ENCODE measurements at regions of chr15 and their contacts with region 1.

Region 1: GRCh38 chr15:55526559-55527036 is 18.6 kb upstream of the DNAAF4 start:
- DNase-seq: peak in 1 of 2 experiments; percentile 54
- H3K4me3 ChIP-seq: no peak overlapping the region
- H3K27ac ChIP-seq: no peak overlapping the region
- H3K4me1 ChIP-seq: no peaks in the 10 kb centered on the region
- H3K27me3 ChIP-seq: peaks cover 0 to 9% (median 7%) of the 10 kb centered on the region in 4 experiments; a peak in 4 of 7 replicates
- CTCF ChIP-seq: peak; percentile 52 to 88 (median 67)
- EP300 ChIP-seq: no peak
- POLR2A ChIP-seq: no peak
- RAD21 ChIP-seq: peak; percentile 54 to 67; a peak in 3 of 4 replicates

Region 2: DNA sequence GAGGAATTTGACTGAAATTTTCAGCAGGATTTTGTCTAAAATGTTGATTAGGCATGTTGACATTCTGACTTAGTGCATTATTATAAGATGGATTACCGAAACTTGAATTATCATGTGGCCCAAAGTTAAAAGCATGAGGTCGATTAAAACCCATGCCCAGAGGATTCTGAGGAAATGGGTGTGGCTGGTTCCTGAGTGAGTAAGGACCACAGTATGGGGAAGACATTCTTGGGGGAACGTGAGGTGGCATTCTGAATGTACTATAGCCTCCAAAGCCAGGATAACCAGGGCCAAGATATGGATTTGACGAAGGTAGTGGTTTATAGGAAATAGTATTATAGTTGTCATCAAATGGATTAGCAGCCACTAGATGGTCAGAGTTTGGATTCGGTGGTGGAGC is 20.1 kb after region 1 on chr15:
- CTCF ChIA-PET with region 1: interaction called, 11 read pairs
- POLR2A ChIA-PET with region 1: no interaction called
- DNase-seq: no peak
- H3K4me3 ChIP-seq: no peak overlapping the region
- H3K27ac ChIP-seq: no peak overlapping the region
- H3K4me1 ChIP-seq: no peaks in the 10 kb centered on the region
- H3K27me3 ChIP-seq: no peaks in the 10 kb centered on the region
- CTCF ChIP-seq: no peak
- EP300 ChIP-seq: no peak
- POLR2A ChIP-seq: no peak
- RAD21 ChIP-seq: no peak

Region 3: DNA sequence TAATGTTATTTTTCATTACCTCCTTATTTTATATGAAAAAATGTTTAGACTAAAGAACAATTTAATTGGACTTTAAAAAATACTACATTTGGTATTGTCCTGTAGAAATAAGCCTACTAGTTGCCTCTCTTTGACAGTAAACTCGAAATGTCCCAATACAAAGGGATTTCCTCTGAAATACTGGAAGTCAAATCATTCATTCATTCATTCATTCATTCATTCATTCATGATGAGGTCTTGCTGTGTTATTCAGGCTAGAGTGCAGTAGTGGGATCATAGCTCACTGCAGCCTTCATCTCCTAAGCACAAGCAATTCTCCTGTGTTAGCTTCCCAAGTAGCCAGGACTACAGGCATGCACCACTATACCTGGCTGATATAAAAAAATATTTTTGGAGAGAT is 112.2 kb after region 1 on chr15:
- CTCF ChIA-PET with region 1: interaction called, 40 read pairs
- POLR2A ChIA-PET with region 1: no interaction called
- DNase-seq: no peak
- H3K4me3 ChIP-seq: no peak overlapping the region
- H3K27ac ChIP-seq: no peak overlapping the region
- H3K4me1 ChIP-seq: no peaks in the 10 kb centered on the region
- H3K27me3 ChIP-seq: no peaks in the 10 kb centered on the region
- CTCF ChIP-seq: no peak
- EP300 ChIP-seq: no peak
- POLR2A ChIP-seq: no peak
- RAD21 ChIP-seq: no peak

Measured in H1 (cell line).